ENCODE measurements at regions of chr11 and their contacts with region 1.

Region 1: GRCh38 chr11:74570266-74571061 is 21.9 kb upstream of the POLD3 start:
- H3K4me3 Mint-ChIP-seq: no peak overlapping the region
- H3K27ac Mint-ChIP-seq: no peak overlapping the region
- H3K4me1 Mint-ChIP-seq: no peaks in the 10 kb centered on the region
- H3K27me3 Mint-ChIP-seq: peaks cover 3% of the 10 kb centered on the region

Region 2: DNA sequence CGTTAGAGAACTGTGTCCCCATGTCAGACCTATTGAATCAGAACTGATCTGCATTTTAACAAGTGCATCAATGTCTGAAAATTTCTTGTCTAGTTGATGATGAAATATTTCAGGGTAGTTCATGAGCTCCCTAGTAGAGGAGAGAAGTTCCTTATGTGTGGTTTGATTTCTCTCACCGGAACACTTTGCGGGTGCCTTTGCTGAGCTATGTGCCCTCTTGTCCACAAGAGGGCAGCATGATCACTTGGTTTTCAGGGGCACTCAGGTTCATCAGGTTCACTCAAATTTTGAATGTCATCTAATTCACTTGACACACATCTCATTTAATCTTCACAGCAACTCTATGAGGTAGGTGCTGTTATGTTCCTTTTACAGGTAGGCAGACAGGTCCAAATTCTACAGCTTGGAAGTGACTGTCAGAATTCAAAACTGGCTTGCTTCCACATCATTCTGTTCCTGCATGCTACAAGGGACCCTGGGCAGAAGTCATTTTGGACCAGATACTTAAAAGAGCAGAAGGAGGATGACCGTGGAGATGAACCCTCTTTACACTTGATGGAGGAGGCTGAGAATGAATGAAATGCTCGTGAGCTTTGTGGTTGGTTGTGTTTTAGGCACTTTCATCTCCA is 314.6 kb before region 1 on chr11:
- intact Hi-C with region 1: loop called (anchors 2 kb)
- H3K4me3 Mint-ChIP-seq: no peak overlapping the region
- H3K27ac Mint-ChIP-seq: no peak overlapping the region
- H3K4me1 Mint-ChIP-seq: peaks cover 6% of the 10 kb centered on the region
- H3K27me3 Mint-ChIP-seq: peaks cover under 1% of the 10 kb centered on the region

Region 3: GRCh38 chr11:74388678-74389327 is 181.7 kb before region 1 on chr11:
- intact Hi-C with region 1: loop called (anchors 1 kb)
- H3K4me3 Mint-ChIP-seq: no peak overlapping the region
- H3K27ac Mint-ChIP-seq: no peak overlapping the region
- H3K4me1 Mint-ChIP-seq: peaks cover 16% of the 10 kb centered on the region
- H3K27me3 Mint-ChIP-seq: no peaks in the 10 kb centered on the region

Region 4: GRCh38 chr11:74492974-74493790 is 77.3 kb before region 1 on chr11 and contains the start of gene LIPT2:
- intact Hi-C with region 1: loop called (anchors 10 kb)
- H3K4me3 Mint-ChIP-seq: peak within 1 kb of the TSS; percentile 75
- H3K27ac Mint-ChIP-seq: peak within 1 kb of the TSS; percentile 83
- H3K4me1 Mint-ChIP-seq: peaks cover 13% of the 10 kb centered on the region
- H3K27me3 Mint-ChIP-seq: no peaks in the 10 kb centered on the region

Region 5: GRCh38 chr11:74532501-74533246 is 37.8 kb before region 1 on chr11:
- intact Hi-C with region 1: no loop called
- H3K4me3 Mint-ChIP-seq: no peak overlapping the region
- H3K27ac Mint-ChIP-seq: no peak overlapping the region
- H3K4me1 Mint-ChIP-seq: peaks cover 11% of the 10 kb centered on the region
- H3K27me3 Mint-ChIP-seq: no peaks in the 10 kb centered on the region